ENCODE measurements at regions of chr10 and their contacts with region 1.

Region 1: GRCh38 chr10:97179731-97180362 is 5.9 kb downstream of the SLIT1 start:
- DNase-seq: peak; percentile 84
- H3K4me3 ChIP-seq: peak overlapping the region in 1 of 2 experiments; percentile 17; a peak in 1 of 4 replicates
- H3K27ac ChIP-seq: peak overlapping the region in 1 of 2 experiments; percentile 97; a peak in 2 of 4 replicates
- H3K4me1 ChIP-seq: peaks cover 0 to 68% of the 10 kb centered on the region in 2 experiments; a peak in 3 of 4 replicates
- H3K27me3 ChIP-seq: peaks cover 46% of the 10 kb centered on the region; the same call in 1 of the 2 replicates
- CTCF ChIP-seq: peak; percentile 40
- EP300 ChIP-seq: 0 out of 4 replicates have a peak, but pooled peaks of 1 of the 2 experiments have one; percentile 32
- RAD21 ChIP-seq: peak; percentile 70

Region 2: DNA sequence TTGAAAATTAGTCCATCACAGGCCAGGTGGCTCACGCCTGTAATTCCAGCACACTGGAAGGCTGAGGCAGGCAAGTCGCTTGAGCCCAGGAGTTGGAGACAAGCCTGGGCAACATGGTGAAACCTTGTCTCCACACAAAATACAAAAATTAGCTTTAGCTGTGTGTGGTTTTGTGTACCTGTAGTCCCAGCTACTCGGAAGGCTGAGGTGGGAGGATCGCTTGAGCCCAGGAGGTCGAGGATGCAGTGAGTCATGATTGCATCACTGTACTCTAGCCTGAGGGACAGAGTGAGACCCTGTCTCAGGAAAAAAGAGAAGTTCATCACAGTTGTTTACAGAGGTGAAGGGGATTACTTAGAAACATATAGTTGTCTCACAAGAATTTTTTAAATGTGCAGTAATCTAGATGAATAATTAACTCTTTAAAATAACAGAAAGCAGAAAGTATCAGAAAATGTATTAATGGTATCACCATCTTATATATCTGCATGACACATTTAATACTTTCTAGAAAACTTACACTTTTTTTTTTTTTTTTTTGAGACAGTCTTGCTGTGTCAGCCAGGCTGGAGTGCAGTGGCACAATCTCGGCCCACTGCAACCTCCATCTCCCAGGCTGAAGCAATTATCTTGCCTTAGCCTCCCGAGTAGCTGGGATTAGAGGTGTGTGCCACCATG is 338.9 kb before region 1 on chr10:
- CTCF ChIA-PET with region 1: no interaction called
- POLR2A ChIA-PET with region 1: no interaction called
- DNase-seq: no peak
- H3K4me3 ChIP-seq: no peak overlapping the region
- H3K27ac ChIP-seq: peak overlapping the region in 1 of 2 experiments; percentile 31; a peak in 2 of 4 replicates
- H3K4me1 ChIP-seq: peaks cover 3 to 22% of the 10 kb centered on the region in 2 experiments; a peak in 2 of 4 replicates
- H3K27me3 ChIP-seq: no peaks in the 10 kb centered on the region
- CTCF ChIP-seq: no peak
- EP300 ChIP-seq: no peak
- RAD21 ChIP-seq: no peak

Region 3: DNA sequence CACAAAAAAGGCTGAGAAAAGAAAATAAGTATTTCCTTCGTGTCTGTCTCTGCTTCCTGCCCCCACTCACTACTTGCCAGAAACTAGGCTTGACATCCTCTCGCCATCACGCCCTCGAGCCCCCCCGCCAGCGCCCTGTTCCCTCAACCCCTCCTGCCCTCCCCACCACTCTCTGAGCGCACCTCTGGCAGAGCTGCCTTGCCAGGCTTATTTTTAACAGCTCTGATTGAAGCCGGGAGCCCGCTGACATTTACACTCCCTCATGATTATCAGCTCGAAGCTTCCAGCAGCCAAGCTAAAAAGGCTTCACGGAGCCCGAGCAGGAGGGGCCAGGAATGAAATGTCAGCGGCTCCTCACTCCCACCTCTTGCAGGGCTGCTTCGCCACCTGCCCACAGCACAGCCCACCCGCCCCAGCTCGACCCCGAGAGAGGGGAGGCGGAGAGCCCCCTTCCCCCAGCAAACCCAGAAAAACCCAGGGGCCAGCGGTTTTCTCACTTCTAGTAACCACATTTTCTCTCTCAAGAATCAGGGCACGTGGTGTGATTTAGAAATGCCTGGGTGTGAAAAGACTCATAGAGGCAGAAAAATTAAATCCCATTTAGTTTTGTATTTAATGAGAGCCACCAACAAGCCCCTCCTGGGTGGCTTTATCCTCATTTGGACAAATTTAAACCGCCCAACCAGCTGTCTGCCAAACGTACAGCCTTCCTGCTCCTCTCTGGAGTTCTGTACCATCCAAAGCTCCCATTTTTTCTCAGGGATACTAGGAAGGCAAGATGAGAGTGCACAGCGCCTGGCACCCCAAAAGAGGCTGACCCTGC is 83.4 kb before region 1 on chr10:
- CTCF ChIA-PET with region 1: interaction called, 20 read pairs
- POLR2A ChIA-PET with region 1: no interaction called
- DNase-seq: peak; percentile 73
- H3K4me3 ChIP-seq: no peak overlapping the region
- H3K27ac ChIP-seq: peak overlapping the region in 1 of 2 experiments; percentile 28; a peak in 2 of 4 replicates
- H3K4me1 ChIP-seq: peaks cover 0 to 29% of the 10 kb centered on the region in 2 experiments; a peak in 1 of 4 replicates
- H3K27me3 ChIP-seq: peaks cover 39% of the 10 kb centered on the region; the same call in 1 of the 2 replicates
- CTCF ChIP-seq: no peak
- EP300 ChIP-seq: no peak
- RAD21 ChIP-seq: no peak

Region 4: GRCh38 chr10:97138174-97138573 is 41.7 kb before region 1 on chr10:
- CTCF ChIA-PET with region 1: interaction called, 10 read pairs
- POLR2A ChIA-PET with region 1: interaction called, 4 read pairs
- DNase-seq: no peak
- H3K4me3 ChIP-seq: no peak overlapping the region
- H3K27ac ChIP-seq: no peak overlapping the region
- H3K4me1 ChIP-seq: peaks cover 0 to 29% of the 10 kb centered on the region in 2 experiments; a peak in 2 of 4 replicates
- H3K27me3 ChIP-seq: peaks cover 23% of the 10 kb centered on the region
- CTCF ChIP-seq: no peak
- EP300 ChIP-seq: no peak
- RAD21 ChIP-seq: peak; percentile 37

Region 5: DNA sequence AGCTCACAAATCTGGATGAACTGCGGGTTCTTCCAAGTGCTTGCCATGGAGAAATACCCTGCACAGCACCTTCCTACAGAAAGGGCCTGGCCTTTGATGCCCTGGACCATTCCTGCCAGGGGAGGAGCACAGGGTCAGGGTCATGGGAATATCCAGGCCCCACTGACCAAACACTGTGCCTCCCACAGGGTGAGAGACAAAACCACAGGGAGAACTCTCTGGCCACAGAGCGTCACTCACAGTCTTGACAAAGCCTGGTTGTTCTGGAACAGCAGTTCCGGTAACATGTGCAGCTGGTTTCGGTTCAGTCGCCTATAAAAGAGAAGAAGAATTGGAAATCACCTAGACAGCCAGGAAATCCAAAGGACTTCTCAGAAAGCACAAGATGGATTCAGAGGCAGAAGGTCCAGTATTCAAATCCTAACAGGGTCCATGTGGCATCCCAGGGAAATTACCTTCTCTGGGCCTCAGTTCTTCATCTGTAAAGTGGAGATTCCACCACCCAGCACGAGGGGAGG is 22.2 kb before region 1 on chr10:
- CTCF ChIA-PET with region 1: interaction called, 13 read pairs
- POLR2A ChIA-PET with region 1: no interaction called
- DNase-seq: no peak
- H3K4me3 ChIP-seq: no peak overlapping the region
- H3K27ac ChIP-seq: no peak overlapping the region
- H3K4me1 ChIP-seq: peaks cover 0 to 20% of the 10 kb centered on the region in 2 experiments; a peak in 2 of 4 replicates
- H3K27me3 ChIP-seq: no peaks in the 10 kb centered on the region
- CTCF ChIP-seq: no peak
- EP300 ChIP-seq: no peak
- RAD21 ChIP-seq: no peak

Measured in SK-N-SH (cell line).